Calu3 (cell line): ENCODE measurements at regions of chr5 and their contacts with region 1.

Region 1: DNA sequence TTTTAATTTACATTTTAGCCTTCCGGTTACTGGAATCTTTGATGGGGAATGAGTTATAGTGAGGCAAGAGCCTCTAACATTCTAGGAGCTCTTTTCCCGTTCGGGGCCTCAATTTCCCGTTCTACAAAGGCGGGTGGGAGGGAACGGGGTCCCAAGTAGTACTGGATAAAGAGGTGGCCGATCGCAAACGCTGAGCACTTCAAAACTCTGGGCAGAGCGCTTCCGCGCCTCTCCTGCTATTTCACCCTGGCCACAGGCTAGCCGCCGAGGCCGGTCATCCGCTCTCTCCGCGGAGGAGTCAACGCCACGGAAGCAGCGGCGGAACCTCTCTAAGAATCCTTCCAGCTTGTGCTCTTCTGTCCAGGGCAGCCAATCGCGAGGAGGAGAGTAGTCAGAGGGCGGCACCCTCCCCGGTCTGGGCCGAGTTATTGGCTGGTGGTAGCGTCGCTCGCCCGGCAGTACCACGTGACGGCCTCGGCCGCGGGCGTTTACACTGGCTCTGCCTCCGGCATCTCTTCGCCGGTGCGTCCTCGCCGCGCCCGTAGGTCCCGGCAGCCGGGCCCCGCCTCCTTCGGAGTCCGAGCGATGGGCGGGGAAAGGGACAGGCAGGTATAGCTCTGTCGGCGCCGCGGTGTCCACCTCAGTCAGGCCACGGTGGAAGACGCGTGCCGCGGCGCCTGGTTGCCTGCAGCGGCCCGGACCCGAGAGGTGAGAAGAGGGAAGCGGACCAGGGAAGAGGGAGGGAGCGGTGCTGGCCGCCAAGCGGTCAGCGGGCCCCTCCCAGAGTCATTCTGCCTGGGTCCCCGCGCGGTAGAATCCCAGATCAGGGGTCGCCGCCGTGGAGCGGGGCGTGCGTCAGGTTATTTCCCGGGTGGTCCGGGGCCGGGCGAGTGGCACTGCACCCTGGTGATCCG is at the start of gene SLC26A2:
- DNase-seq: peak; percentile 99
- H3K4me3 Mint-ChIP-seq: peak within 1 kb of the TSS; percentile 82
- H3K27ac Mint-ChIP-seq: peak within 1 kb of the TSS; percentile 98
- H3K4me1 Mint-ChIP-seq: peaks cover 57% of the 10 kb centered on the region
- H3K27me3 Mint-ChIP-seq: no peaks in the 10 kb centered on the region
- CTCF ChIP-seq: no peak
- total RNA-seq, gene SLC26A2: 17.3 and 34.6 TPM in 2 replicates

Region 2: DNA sequence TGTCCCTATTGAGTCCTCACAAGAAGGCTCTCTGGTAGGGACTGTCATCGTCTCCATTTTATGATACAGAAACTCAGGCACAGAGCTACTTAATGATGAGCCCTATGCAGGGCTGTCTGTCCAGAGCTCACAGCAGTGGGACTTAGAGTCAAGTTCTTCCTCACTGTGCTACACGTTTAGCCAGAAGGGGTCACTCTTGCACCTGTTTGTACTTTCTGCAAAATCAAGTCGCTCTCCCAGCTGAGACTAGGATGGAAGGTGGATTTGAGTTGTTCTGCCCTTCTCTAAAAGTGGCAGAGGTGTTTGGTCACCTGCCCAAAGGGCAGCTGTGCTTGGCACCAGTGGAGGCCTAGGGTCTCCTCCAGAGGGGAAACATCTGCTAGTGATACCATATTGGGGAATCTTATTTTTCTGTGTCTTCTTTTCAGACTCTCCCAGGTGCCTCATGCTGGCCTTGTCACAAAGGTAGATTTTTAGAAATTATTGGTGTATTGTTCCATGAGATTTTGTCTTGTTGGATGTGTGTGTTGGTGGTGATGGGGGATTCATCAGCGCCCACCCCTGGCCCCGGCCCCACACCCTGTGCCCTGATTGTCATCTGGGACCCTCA is 126.2 kb before region 1 on chr5:
- CTCF ChIA-PET with region 1: interaction called, 61 read pairs
- intact Hi-C with region 1: loop called (anchors 1 kb)
- DNase-seq: peak; percentile 79
- H3K4me3 Mint-ChIP-seq: no peak overlapping the region
- H3K27ac Mint-ChIP-seq: no peak overlapping the region
- H3K4me1 Mint-ChIP-seq: no peaks in the 10 kb centered on the region
- H3K27me3 Mint-ChIP-seq: no peaks in the 10 kb centered on the region
- CTCF ChIP-seq: peak; percentile 73

Region 3: DNA sequence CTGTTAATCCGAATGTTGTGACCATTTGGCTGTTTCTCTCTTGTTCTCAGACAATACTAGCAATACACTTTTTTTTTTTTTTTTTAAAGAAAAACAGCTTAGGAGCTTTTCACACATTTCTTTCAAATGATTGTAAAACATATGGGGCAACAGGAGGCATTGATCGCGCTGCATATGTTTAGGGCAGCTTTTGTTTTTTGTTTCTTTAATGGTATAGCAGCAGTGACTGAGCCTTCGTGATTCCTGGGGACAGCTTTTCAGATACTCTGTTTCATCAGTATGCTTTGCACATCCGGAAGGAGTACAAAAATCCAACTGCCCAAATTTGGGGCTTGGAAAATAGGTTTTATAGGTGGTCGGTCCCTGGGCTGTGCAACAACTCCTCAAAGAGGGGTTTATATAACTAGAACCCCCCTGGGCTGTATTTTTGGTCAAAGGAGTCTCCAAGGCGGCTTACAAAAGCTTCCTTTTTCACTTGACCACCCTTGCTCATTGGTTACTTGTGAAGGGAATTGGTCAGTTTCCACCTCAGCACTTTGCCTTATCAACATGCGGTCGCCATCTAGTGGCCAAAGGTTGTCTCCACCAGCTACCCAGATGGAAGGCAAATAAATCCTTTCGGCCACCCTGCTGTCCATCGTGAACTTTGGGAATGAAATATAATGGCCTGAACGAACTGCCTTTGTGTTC is 107.7 kb before region 1 on chr5:
- CTCF ChIA-PET with region 1: interaction called, 13 read pairs
- intact Hi-C with region 1: loop called (anchors 1 kb)
- DNase-seq: peak; percentile 79
- H3K4me3 Mint-ChIP-seq: no peak overlapping the region
- H3K27ac Mint-ChIP-seq: no peak overlapping the region
- H3K4me1 Mint-ChIP-seq: peaks cover 18% of the 10 kb centered on the region
- H3K27me3 Mint-ChIP-seq: no peaks in the 10 kb centered on the region
- CTCF ChIP-seq: peak; percentile 91

Region 4: DNA sequence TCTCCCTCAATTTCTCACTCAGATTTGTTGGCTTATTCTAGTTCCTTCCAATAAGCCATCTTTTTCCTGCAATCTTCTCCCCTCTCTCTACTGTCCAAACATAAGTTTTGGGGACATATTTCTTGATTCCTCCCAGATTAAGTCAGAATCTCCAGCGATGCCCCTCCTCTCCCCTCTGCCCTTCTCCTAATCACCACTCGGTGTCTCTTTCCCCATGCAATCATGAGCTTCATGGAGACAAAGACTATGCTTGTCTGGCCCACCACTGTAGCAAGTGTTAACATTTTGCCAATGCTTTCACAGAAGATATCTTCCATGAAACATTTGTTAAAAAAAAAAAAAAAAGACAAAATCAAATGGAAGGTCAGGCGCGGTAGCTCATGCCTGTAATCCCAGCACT is 58.4 kb before region 1 on chr5:
- CTCF ChIA-PET with region 1: interaction called, 23 read pairs
- intact Hi-C with region 1: loop called (anchors 1 kb)
- DNase-seq: no peak
- H3K4me3 Mint-ChIP-seq: no peak overlapping the region
- H3K27ac Mint-ChIP-seq: no peak overlapping the region
- H3K4me1 Mint-ChIP-seq: peaks cover 7% of the 10 kb centered on the region
- H3K27me3 Mint-ChIP-seq: no peaks in the 10 kb centered on the region
- CTCF ChIP-seq: no peak

Region 5: DNA sequence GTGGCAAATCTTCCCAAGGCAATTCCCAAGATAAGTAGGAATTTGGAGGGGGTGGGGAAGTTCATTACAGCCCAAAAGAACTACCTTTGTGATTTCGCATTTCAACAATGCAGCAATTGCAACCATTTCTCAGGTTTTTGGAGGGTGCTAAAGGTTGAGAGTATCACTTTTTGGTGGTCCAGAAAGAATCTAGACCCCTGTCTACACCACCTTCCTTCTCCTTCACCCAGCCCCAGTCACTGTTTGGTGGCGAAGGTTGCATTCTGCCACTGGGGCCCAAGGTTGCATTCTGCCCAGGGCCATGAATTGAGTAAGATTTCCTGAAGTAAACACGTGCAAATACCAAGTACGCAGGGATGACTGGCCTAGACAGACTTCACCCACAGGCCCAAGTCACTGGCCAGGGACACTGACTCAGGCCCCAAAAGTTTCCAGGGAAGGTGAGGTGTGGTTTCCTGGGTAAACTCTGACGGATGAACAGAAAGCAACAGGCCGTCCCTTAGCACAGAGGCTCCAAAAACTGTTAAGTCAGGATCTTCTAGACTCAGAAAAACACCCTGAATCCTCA is 21.7 kb before region 1 on chr5:
- CTCF ChIA-PET with region 1: interaction called, 6 read pairs
- intact Hi-C with region 1: loop called (anchors 1 kb)
- DNase-seq: peak; percentile 86
- H3K4me3 Mint-ChIP-seq: peak overlapping the region; percentile 27
- H3K27ac Mint-ChIP-seq: peak overlapping the region; percentile 88
- H3K4me1 Mint-ChIP-seq: peaks cover 84% of the 10 kb centered on the region
- H3K27me3 Mint-ChIP-seq: no peaks in the 10 kb centered on the region
- CTCF ChIP-seq: no peak

Region 6: GRCh38 chr5:149990518-149991376 is 30.2 kb after region 1 on chr5:
- CTCF ChIA-PET with region 1: interaction called, 14 read pairs
- intact Hi-C with region 1: no loop called
- DNase-seq: peak; percentile 80
- H3K4me3 Mint-ChIP-seq: no peak overlapping the region
- H3K27ac Mint-ChIP-seq: peak overlapping the region; percentile 27
- H3K4me1 Mint-ChIP-seq: peaks cover 13% of the 10 kb centered on the region
- H3K27me3 Mint-ChIP-seq: no peaks in the 10 kb centered on the region
- CTCF ChIP-seq: peak; percentile 89